Activated T-helper 1 cell treated with anti-CD3 and anti-CD28 coated beads, Interleukin-12 subunit alpha, Interleukin-12 subunit beta, Interleukin-2, Interleukin-4 antibody, amounts not matched to agents 30 ng/mL and 10 ng/mL and 1 ng/mL, durations not matched to agents 14 hours and 24 hours and 36 hours (primary cell): ENCODE measurements at regions of chr3 and their contacts with region 1.

Region 1: DNA sequence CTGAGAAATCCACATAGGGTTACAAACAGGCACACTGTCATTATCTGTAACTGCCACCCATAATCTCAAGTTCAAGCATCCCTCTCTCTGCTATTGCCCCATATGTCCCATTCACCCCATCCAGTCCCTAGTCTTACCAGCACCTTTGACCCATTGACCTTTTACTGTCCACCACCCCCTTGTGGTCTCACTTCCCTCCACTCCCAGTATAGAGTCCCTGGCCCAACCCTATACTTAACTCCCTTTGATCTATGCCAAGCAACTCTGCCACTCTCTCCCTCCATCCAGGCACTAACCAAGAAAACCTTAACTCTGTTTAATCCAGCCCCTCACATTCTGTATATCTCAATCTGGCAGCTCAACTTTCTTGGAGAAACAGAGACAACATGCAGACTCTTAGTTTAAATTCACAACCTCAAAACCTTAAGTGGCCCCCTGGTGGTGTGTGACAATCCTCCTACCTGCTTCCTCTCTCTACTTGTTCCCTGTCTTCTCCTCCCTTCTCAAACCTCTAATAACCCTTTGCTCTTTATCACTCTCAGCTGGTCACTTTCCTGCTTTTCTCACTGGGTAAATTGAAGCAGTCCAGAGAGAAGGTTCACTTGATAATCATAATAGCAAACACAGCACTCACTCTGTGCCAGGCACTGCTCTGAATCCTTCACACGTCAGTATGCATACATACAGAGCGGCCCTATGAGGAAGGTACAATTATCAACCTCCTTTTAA is 162.7 kb downstream of the STT3B start:
- DNase-seq: no peak
- H3K4me3 Mint-ChIP-seq: no peak overlapping the region
- H3K27ac Mint-ChIP-seq: no peak overlapping the region
- H3K4me1 Mint-ChIP-seq: no peaks in the 10 kb centered on the region
- H3K27me3 Mint-ChIP-seq: no peaks in the 10 kb centered on the region

Region 2: GRCh38 chr3:31550452-31551251 is 144.8 kb before region 1 on chr3:
- intact Hi-C with region 1: loop called (anchors 1 kb)
- DNase-seq: no peak
- H3K4me3 Mint-ChIP-seq: no peak overlapping the region
- H3K27ac Mint-ChIP-seq: no peak overlapping the region
- H3K4me1 Mint-ChIP-seq: peaks cover 75% of the 10 kb centered on the region
- H3K27me3 Mint-ChIP-seq: no peaks in the 10 kb centered on the region

Region 3: GRCh38 chr3:31848911-31849310 is 153.5 kb after region 1 on chr3:
- intact Hi-C with region 1: no loop called
- DNase-seq: no peak
- H3K4me3 Mint-ChIP-seq: no peak overlapping the region
- H3K27ac Mint-ChIP-seq: no peak overlapping the region
- H3K4me1 Mint-ChIP-seq: no peaks in the 10 kb centered on the region
- H3K27me3 Mint-ChIP-seq: no peaks in the 10 kb centered on the region